Right ventricle myocardium inferior (tissue), 1 donor: ENCODE measurements at regions of chr12 and their contacts with region 1.

Region 1: GRCh38 chr12:93677195-93678064 is at the start of gene CRADD:
- DNase-seq: peak; percentile 85
- ATAC-seq: peak; percentile 94
- total RNA-seq, gene CRADD: 40.3 TPM

Region 2: DNA sequence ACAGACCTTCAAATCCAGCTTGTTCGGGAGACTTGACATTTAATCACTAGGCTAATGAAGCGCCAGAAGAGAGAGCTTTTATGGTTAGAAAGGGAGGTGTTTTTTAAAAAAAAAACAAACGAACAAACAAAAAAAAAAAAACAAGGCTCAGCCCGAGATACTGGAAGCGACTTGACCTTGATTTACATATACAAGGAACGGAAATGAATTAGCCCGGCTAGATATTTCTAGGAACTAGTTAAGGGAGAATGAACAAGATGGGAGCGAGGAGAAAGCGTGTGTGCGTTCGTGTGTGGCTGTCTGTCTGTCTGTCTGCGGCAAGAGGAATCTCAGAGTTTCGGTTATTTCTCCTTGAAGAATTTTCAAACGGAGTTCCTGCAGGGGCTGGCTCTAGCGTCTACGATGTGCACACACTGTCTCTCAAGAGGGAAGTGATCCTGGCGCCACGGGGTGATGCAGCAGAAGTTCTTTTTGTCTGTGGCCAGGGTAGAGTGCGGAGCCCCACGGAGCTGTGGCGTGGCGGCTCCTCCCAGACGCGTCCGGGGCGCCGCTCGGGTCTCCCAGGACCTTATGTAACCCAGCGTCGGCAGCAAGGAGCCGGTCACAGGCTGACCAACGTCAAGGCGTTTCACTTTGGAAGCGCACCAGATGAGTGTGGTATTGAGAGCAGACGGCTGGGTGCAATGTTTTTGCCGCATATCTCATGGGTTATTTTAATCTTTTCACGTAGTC is 86.1 kb before region 1 on chr12:
- intact Hi-C with region 1: loop called (anchors 5 kb)
- DNase-seq: peak; percentile 92
- ATAC-seq: peak; percentile 97

Region 3: GRCh38 chr12:93813972-93814821 is 136.8 kb after region 1 on chr12:
- intact Hi-C with region 1: loop called (anchors 5 kb)
- DNase-seq: peak; percentile 86
- ATAC-seq: peak; percentile 92

Region 4: DNA sequence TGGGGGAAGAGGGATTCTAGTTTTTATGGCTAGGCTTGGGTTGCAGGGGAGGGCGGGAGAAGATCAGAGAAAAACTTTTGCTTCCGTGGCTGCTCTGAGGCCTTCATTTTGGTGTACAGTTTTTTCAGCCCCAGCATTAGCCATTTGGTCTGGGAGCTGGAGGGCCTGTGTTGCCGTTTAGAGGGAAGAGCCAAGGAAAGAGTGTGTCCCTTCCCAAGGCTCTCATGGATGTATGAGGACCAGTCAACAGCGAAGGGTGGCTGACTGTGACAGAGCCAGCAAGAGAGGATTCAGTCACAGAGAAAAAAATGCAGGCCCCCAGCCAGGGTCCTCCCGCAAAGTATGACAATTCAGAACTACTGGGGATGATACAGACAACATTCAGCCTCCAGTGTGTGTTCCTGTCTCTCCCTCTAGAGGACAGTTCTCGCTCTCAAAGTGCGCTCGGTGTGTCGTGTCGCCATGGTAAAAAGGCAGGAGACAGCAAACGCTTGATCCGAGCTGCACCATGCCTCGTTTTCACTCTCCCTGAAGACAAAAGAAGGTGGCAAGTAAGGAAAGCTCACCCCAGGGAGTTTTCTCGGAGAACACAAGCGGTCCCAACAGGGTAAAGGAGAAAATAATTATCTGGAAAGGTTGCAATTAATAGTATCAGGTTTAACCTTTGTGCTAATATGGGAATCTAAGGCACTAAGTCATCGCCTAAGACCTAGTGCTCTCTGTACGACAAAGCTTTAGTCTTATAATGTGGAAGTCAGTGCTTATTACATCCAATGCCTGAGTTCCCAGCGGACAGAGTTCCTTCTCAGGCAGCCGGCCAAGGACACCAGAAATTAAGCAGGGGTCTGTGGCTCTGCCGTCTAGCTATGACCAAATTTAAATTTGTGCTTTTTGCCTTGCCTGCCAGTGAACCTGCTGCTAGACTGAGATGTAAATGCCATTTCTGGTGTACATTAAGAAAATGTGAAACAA is 313.7 kb after region 1 on chr12:
- intact Hi-C with region 1: loop called (anchors 5 kb)
- DNase-seq: no peak
- ATAC-seq: peak; percentile 93

Region 5: GRCh38 chr12:94039914-94040313 is 362.5 kb after region 1 on chr12:
- intact Hi-C with region 1: no loop called
- DNase-seq: no peak
- ATAC-seq: peak; percentile 74

Region 6: GRCh38 chr12:94101738-94102660 is 424.6 kb after region 1 on chr12:
- intact Hi-C with region 1: loop called (anchors 2 kb)
- DNase-seq: peak; percentile 94
- ATAC-seq: peak; percentile 91